Posterior vena cava (tissue), 2 donors: ENCODE measurements at regions of chr7 and their contacts with region 1.

Region 1: GRCh38 chr7:149261829-149262617 is at the start of gene ZNF783:
- DNase-seq: peak; percentile 97
- total RNA-seq, gene ZNF783: 10.8 to 16.3 TPM

Region 2: GRCh38 chr7:148262721-148263229 is 999.2 kb before region 1 on chr7:
- intact Hi-C with region 1: loop called in 1 of 2 experiments (anchors 5 kb)
- DNase-seq: peak; percentile 88

Region 3: GRCh38 chr7:149199234-149199995 is 62.6 kb before region 1 on chr7:
- intact Hi-C with region 1: loop called in 1 of 2 experiments (anchors 2 kb)
- DNase-seq: no peak

Region 4: DNA sequence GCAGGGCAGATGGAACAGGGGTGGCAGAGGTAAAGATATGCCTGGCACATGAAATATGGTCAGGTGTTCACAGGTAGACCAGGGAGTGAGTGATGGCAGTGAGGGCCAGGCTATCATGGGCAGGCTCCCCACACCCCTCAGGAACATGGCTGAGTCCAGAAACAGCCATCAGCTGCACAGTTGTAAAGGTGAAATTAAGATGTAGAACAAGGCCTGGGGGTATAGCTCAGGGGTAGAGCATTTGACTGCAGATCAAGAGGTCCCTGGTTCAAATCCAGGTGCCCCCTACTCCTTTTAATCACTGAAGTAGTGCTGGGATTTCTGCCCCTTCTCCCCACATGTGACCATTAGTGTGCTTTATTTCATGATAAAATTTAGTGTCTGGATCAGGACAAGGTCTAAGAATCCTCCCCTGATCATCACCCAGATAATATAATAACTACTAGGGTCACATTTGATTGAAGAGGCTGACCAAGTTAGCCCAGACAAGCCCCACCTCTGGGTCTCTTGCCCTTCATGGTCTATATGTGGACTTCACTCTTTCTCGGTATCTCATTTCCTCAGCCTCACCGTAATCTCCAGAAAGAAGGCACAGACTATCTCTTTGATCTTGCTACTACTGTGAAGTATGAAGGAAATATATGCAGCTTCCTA is 69.0 kb after region 1 on chr7:
- intact Hi-C with region 1: no loop called
- DNase-seq: no peak